ENCODE measurements at regions of chr4 and their contacts with region 1.

Region 1: GRCh38 chr4:105471566-105472176 is 2.2 kb downstream of the PPA2 start:
- DNase-seq: peak; percentile 52 to 80 (median 66)
- H3K4me3 ChIP-seq: peak overlapping the region; percentile 28
- H3K4me3 Mint-ChIP-seq: peak overlapping the region; percentile 76 to 99 (median 94)
- H3K27ac ChIP-seq: peak overlapping the region; percentile 97
- H3K27ac Mint-ChIP-seq: peak overlapping the region; percentile 44 to 100 (median 76)
- H3K4me1 ChIP-seq: peaks cover 21% of the 10 kb centered on the region
- H3K4me1 Mint-ChIP-seq: peaks cover 58 to 65% (median 64%) of the 10 kb centered on the region in 3 donors
- H3K27me3 ChIP-seq: no peaks in the 10 kb centered on the region
- H3K27me3 Mint-ChIP-seq: no peaks in the 10 kb centered on the region

Region 2: GRCh38 chr4:105140684-105141490 is 330.8 kb before region 1 on chr4:
- CTCF ChIA-PET with region 1: interaction called, 40 read pairs
- POLR2A ChIA-PET with region 1: interaction called, 4 read pairs
- DNase-seq: peak; percentile 5 to 60 (median 37)
- H3K4me3 ChIP-seq: no peak overlapping the region
- H3K4me3 Mint-ChIP-seq: peak overlapping the region in 1 of 7 donors; percentile 50
- H3K27ac ChIP-seq: no peak overlapping the region
- H3K27ac Mint-ChIP-seq: no peak overlapping the region
- H3K4me1 ChIP-seq: peaks cover 5% of the 10 kb centered on the region
- H3K4me1 Mint-ChIP-seq: peaks cover 8 to 12% (median 11%) of the 10 kb centered on the region in 3 donors
- H3K27me3 ChIP-seq: no peaks in the 10 kb centered on the region
- H3K27me3 Mint-ChIP-seq: peaks cover 3 to 7% of the 10 kb centered on the region in 2 donors

Region 3: DNA sequence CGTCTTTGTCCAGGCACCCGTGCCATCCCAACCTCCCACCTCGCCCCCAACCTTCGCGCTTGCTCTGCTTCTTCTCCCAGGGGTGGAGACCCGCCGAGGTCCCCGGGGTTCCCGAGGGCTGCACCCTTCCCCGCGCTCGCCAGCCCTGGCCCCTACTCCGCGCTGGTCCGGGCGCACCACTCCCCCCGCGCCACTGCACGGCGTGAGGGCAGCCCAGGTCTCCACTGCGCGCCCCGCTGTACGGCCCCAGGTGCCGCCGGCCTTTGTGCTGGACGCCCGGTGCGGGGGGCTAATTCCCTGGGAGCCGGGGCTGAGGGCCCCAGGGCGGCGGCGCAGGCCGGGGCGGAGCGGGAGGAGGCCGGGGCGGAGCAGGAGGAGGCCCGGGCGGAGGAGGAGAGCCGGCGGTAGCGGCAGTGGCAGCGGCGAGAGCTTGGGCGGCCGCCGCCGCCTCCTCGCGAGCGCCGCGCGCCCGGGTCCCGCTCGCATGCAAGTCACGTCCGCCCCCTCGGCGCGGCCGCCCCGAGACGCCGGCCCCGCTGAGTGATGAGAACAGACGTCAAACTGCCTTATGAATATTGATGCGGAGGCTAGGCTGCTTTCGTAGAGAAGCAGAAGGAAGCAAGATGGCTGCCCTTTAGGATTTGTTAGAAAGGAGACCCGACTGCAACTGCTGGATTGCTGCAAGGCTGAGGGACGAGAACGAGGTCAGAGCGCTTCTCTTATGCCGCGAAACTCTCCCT is 325.2 kb before region 1 on chr4 and contains the start of gene TET2:
- CTCF ChIA-PET with region 1: interaction called, 40 read pairs
- POLR2A ChIA-PET with region 1: interaction called, 6 read pairs
- DNase-seq: peak; percentile 66 to 86 (median 79)
- H3K4me3 ChIP-seq: peak within 1 kb of the TSS; percentile 99
- H3K4me3 Mint-ChIP-seq: peak within 1 kb of the TSS; percentile 99 to 100 (median 100)
- H3K27ac ChIP-seq: peak within 1 kb of the TSS; percentile 92
- H3K27ac Mint-ChIP-seq: peak within 1 kb of the TSS; percentile 92 to 100 (median 98)
- H3K4me1 ChIP-seq: peaks cover 30% of the 10 kb centered on the region
- H3K4me1 Mint-ChIP-seq: peaks cover 44 to 49% (median 45%) of the 10 kb centered on the region in 3 donors
- H3K27me3 ChIP-seq: no peaks in the 10 kb centered on the region
- H3K27me3 Mint-ChIP-seq: peaks cover 0 to 7% of the 10 kb centered on the region in 2 donors
- total RNA-seq, gene TET2: 25.8 to 28.0 TPM

Region 4: DNA sequence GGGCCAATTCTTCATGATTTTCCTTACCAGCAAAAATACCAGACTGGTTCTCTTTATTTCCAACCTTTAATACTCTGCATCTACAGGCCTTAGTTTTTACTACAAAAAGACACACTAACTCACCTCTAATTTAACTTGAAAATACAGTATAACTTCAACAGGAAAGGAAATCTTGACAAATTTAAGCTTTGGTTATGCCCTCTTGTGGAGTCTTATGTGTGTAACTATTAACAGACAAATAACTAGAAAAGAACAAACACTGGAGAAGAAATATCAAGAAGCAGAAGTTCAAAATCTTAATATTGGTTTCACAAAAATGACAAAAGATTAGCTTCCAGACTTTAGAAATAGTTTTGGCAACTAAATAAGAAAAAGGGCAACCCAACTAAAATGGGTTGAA is 30.8 kb before region 1 on chr4:
- CTCF ChIA-PET with region 1: interaction called, 11 read pairs
- POLR2A ChIA-PET with region 1: no interaction called
- DNase-seq: no peak
- H3K4me3 ChIP-seq: no peak overlapping the region
- H3K4me3 Mint-ChIP-seq: no peak overlapping the region
- H3K27ac ChIP-seq: no peak overlapping the region
- H3K27ac Mint-ChIP-seq: no peak overlapping the region
- H3K4me1 ChIP-seq: no peaks in the 10 kb centered on the region
- H3K4me1 Mint-ChIP-seq: peaks cover 0 to 1% (median under 1%) of the 10 kb centered on the region in 3 donors
- H3K27me3 ChIP-seq: no peaks in the 10 kb centered on the region
- H3K27me3 Mint-ChIP-seq: no peaks in the 10 kb centered on the region

Region 5: DNA sequence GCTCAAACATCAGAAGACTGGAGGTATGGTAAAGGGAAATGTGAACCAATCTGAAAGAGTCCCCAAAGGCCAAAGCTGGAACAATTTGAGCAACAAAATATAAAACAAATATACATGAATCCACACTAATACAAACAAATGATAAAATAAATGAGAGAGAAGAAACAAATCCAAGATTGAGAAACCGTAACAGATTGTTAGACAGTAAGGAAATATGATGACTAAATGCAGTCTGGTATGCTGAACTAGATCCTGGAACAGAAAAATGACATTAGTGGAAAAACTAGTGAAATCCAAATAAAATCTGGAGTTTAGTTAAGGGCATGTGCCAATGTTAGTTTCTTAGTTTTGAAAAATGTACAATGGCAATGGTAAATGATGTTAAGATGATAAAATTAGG is 13.7 kb before region 1 on chr4:
- CTCF ChIA-PET with region 1: interaction called, 14 read pairs
- POLR2A ChIA-PET with region 1: interaction called, 4 read pairs
- DNase-seq: no peak
- H3K4me3 ChIP-seq: no peak overlapping the region
- H3K4me3 Mint-ChIP-seq: no peak overlapping the region
- H3K27ac ChIP-seq: no peak overlapping the region
- H3K27ac Mint-ChIP-seq: no peak overlapping the region
- H3K4me1 ChIP-seq: no peaks in the 10 kb centered on the region
- H3K4me1 Mint-ChIP-seq: peaks cover 40 to 75% (median 64%) of the 10 kb centered on the region in 3 donors
- H3K27me3 ChIP-seq: no peaks in the 10 kb centered on the region
- H3K27me3 Mint-ChIP-seq: no peaks in the 10 kb centered on the region

Region 6: DNA sequence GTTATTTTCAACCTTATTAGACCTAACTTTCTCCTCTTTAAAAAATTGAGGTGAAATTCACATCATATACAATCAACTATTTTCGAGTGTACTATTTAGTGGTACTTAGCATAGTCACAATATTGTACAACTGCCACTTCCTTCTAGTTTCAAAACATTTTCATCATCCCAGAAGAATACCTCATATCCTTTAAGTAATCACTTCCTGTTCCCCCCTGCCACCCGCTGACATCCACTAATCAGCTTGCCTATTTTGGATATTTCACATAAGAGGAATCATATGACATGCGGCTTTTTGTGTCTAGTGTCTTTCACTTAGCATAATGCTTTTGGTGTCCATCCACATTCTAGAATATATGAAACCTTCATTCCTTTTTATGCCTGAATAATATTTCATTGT is 12.2 kb after region 1 on chr4:
- CTCF ChIA-PET with region 1: interaction called, 10 read pairs
- POLR2A ChIA-PET with region 1: no interaction called
- DNase-seq: no peak
- H3K4me3 ChIP-seq: no peak overlapping the region
- H3K4me3 Mint-ChIP-seq: no peak overlapping the region
- H3K27ac ChIP-seq: no peak overlapping the region
- H3K27ac Mint-ChIP-seq: no peak overlapping the region
- H3K4me1 ChIP-seq: no peaks in the 10 kb centered on the region
- H3K4me1 Mint-ChIP-seq: no peaks in the 10 kb centered on the region
- H3K27me3 ChIP-seq: no peaks in the 10 kb centered on the region
- H3K27me3 Mint-ChIP-seq: peaks cover 7 to 23% of the 10 kb centered on the region in 2 donors

Measured in CD8-positive, alpha-beta memory T cell (primary cell).